CD8-positive, alpha-beta T cell (primary cell): ENCODE measurements at regions of chr1 and their contacts with region 1.

Region 1: DNA sequence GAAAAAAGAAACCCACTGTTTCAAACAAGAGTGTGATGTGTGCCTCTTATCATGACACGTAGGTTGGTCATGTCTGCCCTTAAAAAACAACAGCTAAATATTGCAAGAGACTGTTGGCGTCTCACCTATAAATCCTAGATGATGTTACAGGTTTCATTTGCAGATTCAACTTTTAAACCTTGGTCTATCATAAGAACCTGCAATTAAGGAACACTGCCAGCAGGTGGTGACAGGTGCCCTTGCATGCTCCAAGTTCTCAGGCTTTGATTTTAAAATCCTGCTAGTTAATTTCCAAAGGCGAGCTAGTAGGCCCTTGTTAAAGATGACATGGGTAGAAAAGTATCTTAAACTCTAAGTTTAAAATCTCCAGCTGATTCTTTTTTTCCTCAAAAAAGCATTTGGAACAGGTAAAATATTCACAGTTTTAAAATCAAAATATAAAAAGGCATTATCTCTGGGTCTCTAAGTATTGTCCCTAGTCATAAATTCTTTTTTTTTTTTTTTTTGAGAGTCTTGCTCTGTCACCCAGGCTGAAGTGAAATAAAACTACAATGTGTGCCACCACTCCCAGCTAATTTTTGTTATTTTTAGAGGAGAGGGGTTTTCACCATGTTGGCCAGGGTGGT is 39.1 kb downstream of the CLSTN1 start:
- DNase-seq: peak; percentile 36 to 84 (median 66)
- ATAC-seq: peak; percentile 54
- H3K4me3 ChIP-seq: no peak overlapping the region
- H3K4me3 Mint-ChIP-seq: no peak overlapping the region
- H3K27ac ChIP-seq: no peak overlapping the region
- H3K27ac Mint-ChIP-seq: no peak overlapping the region
- H3K4me1 ChIP-seq: peaks cover 20% of the 10 kb centered on the region
- H3K4me1 Mint-ChIP-seq: peaks cover 33% of the 10 kb centered on the region
- H3K27me3 ChIP-seq: no peaks in the 10 kb centered on the region
- H3K27me3 Mint-ChIP-seq: no peaks in the 10 kb centered on the region
- CTCF ChIP-seq: peak; percentile 80

Region 2: DNA sequence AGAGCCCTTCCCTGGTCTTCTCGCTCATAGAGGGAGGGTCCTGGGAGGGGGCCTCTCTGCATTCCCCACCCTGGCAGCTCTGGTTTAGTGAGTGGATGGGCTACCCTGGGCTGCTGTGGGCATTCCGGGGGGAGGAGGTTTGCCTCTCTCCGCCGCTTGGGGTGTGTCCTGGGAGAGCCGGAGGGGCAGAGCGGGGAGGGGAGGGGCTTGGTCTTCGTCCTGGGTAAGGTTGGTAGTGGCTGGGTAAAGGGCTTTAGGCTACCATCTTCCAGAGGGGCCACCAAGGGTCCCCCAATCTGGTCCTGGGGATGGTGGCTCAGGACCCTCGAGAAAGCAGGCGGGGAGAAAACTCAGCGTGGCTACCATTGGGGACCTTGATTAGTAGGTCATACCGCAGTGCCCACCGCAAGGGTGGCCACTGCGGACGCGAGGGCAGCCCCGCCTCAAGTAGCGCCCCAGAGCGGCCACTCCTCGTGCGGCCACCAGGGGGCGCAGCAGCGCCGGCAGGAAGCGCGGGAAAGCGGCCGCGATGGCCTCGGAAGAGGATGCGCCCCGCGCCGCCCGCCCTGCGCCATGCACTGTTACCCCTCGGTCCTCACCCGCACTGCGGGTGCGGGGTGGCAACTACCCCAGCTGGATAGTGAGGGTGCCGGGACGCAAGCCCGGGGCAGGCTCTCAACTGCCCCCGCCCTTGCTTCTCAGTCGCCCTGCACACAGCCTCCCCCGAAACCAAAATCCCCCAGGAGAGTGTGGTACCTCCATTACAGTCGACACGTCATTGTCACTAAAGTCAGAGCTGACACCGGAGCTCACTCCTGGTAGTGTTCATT is 289.5 kb before region 1 on chr1:
- CTCF ChIA-PET with region 1: no interaction called
- POLR2A ChIA-PET with region 1: no interaction called
- intact Hi-C with region 1: no loop called
- DNase-seq: peak; percentile 33 to 82 (median 65)
- ATAC-seq: peak; percentile 83
- H3K4me3 ChIP-seq: peak overlapping the region; percentile 39 to 43
- H3K4me3 Mint-ChIP-seq: peak overlapping the region; percentile 67
- H3K27ac ChIP-seq: no peak overlapping the region
- H3K27ac Mint-ChIP-seq: no peak overlapping the region
- H3K4me1 ChIP-seq: peaks cover 8% of the 10 kb centered on the region
- H3K4me1 Mint-ChIP-seq: peaks cover 5% of the 10 kb centered on the region
- H3K27me3 ChIP-seq: no peaks in the 10 kb centered on the region
- H3K27me3 Mint-ChIP-seq: peaks cover 10% of the 10 kb centered on the region
- CTCF ChIP-seq: peak; percentile 93

Region 3: DNA sequence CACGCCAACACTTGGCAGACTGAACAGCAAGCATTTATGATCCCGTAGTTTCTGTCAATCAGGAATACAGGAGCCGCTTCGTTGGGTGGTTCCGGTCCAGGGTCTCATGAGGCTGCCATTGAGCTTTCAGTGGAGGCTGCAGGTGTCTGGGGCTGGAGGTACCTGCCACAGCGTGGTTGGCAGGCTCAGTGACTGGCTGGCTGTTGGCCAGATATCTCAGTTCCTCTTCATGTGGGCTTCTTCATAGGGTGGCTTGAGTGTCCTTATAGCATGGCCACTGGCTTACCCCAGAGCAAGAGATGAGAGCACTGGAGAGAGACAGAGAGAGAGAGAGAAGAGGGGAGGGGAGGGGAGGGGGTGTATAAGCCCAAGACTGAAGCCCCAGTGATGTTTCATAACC is 103.8 kb before region 1 on chr1:
- CTCF ChIA-PET with region 1: no interaction called
- POLR2A ChIA-PET with region 1: no interaction called
- intact Hi-C with region 1: no loop called
- DNase-seq: no peak
- ATAC-seq: no peak
- H3K4me3 ChIP-seq: no peak overlapping the region
- H3K4me3 Mint-ChIP-seq: no peak overlapping the region
- H3K27ac ChIP-seq: peak overlapping the region in 1 of 2 experiments; percentile 17
- H3K27ac Mint-ChIP-seq: peak overlapping the region; percentile 90
- H3K4me1 ChIP-seq: peaks cover 74% of the 10 kb centered on the region
- H3K4me1 Mint-ChIP-seq: peaks cover 68% of the 10 kb centered on the region
- H3K27me3 ChIP-seq: no peaks in the 10 kb centered on the region
- H3K27me3 Mint-ChIP-seq: no peaks in the 10 kb centered on the region
- CTCF ChIP-seq: no peak

Region 4: GRCh38 chr1:9724706-9725476 is 59.7 kb before region 1 on chr1:
- CTCF ChIA-PET with region 1: interaction called, 16 read pairs
- POLR2A ChIA-PET with region 1: no interaction called
- intact Hi-C with region 1: no loop called
- DNase-seq: peak; percentile 47 to 84 (median 75)
- ATAC-seq: peak; percentile 47
- H3K4me3 ChIP-seq: no peak overlapping the region
- H3K4me3 Mint-ChIP-seq: peak overlapping the region; percentile 8
- H3K27ac ChIP-seq: peak overlapping the region in 1 of 2 experiments; percentile 16
- H3K27ac Mint-ChIP-seq: peak overlapping the region; percentile 80
- H3K4me1 ChIP-seq: peaks cover 82% of the 10 kb centered on the region
- H3K4me1 Mint-ChIP-seq: peaks cover 71% of the 10 kb centered on the region
- H3K27me3 ChIP-seq: no peaks in the 10 kb centered on the region
- H3K27me3 Mint-ChIP-seq: no peaks in the 10 kb centered on the region
- CTCF ChIP-seq: peak; percentile 97

Region 5: GRCh38 chr1:9798236-9799130 is 13.9 kb after region 1 on chr1:
- CTCF ChIA-PET with region 1: interaction called, 26 read pairs
- POLR2A ChIA-PET with region 1: no interaction called
- intact Hi-C with region 1: no loop called
- DNase-seq: no peak
- ATAC-seq: no peak
- H3K4me3 ChIP-seq: no peak overlapping the region
- H3K4me3 Mint-ChIP-seq: no peak overlapping the region
- H3K27ac ChIP-seq: no peak overlapping the region
- H3K27ac Mint-ChIP-seq: peak overlapping the region; percentile 42
- H3K4me1 ChIP-seq: peaks cover 9% of the 10 kb centered on the region
- H3K4me1 Mint-ChIP-seq: peaks cover 58% of the 10 kb centered on the region
- H3K27me3 ChIP-seq: no peaks in the 10 kb centered on the region
- H3K27me3 Mint-ChIP-seq: no peaks in the 10 kb centered on the region
- CTCF ChIP-seq: no peak

Region 6: GRCh38 chr1:9823943-9824701 is 39.5 kb after region 1 on chr1 and contains the start of gene CLSTN1:
- CTCF ChIA-PET with region 1: interaction called, 12 read pairs
- POLR2A ChIA-PET with region 1: interaction called, 3 read pairs
- intact Hi-C with region 1: loop called (anchors 2 kb)
- DNase-seq: peak; percentile 76 to 93 (median 91)
- ATAC-seq: peak; percentile 72
- H3K4me3 ChIP-seq: peak within 1 kb of the TSS; percentile 58 to 72
- H3K4me3 Mint-ChIP-seq: peak within 1 kb of the TSS; percentile 96
- H3K27ac ChIP-seq: peak within 1 kb of the TSS; percentile 37 to 76
- H3K27ac Mint-ChIP-seq: peak within 1 kb of the TSS; percentile 89
- H3K4me1 ChIP-seq: peaks cover 36% of the 10 kb centered on the region
- H3K4me1 Mint-ChIP-seq: peaks cover 43% of the 10 kb centered on the region
- H3K27me3 ChIP-seq: no peaks in the 10 kb centered on the region
- H3K27me3 Mint-ChIP-seq: no peaks in the 10 kb centered on the region
- CTCF ChIP-seq: no peak
- total RNA-seq, gene CLSTN1: 50.0 to 51.1 TPM

Region 7: DNA sequence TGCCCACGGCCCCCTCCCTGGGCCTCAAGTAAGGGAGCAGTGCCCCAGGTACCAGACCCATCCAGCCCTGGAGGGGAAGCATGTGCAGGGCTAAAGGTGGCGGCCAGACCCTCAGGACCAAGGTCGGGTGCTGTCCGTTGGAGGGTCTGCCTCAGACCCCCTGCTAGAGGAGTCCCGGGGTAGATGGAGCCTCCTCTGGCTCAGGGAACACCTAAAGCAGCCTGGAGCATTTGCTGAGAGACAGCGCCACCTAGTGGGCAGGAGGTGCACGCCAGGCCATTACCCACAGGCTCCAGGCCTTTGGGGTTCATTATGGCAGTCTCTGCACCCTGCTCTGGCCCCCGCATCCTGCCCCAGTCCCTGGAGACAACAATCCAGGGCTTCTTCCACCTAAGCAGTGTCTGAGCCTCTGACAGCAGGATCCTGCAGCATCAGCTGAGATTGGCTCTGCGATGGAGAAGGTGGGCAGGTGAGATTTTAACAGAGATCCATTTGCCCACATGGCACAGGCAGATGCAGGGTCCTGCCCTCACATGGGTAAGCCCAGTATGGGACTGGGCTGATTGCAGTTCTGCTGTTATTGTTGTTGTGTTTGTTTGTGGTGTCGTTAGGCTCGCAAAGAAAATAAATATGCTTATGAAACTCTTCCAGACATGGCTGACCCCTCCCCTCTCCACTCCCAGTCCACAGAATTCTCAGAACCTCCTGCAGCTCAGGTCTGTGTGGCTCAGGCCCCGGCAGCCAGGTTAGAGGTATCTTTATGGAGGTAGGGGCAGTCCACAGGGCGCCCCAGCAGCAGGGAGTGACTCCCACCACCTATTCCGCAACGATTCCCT is 83.0 kb after region 1 on chr1:
- CTCF ChIA-PET with region 1: interaction called, 361 read pairs
- POLR2A ChIA-PET with region 1: interaction called, 3 read pairs
- intact Hi-C with region 1: loop called in 1 of 2 experiments (anchors 1 kb)
- DNase-seq: peak; percentile 76 to 95 (median 88)
- ATAC-seq: peak; percentile 99
- H3K4me3 ChIP-seq: no peak overlapping the region
- H3K4me3 Mint-ChIP-seq: no peak overlapping the region
- H3K27ac ChIP-seq: no peak overlapping the region
- H3K27ac Mint-ChIP-seq: no peak overlapping the region
- H3K4me1 ChIP-seq: no peaks in the 10 kb centered on the region
- H3K4me1 Mint-ChIP-seq: no peaks in the 10 kb centered on the region
- H3K27me3 ChIP-seq: no peaks in the 10 kb centered on the region
- H3K27me3 Mint-ChIP-seq: no peaks in the 10 kb centered on the region
- CTCF ChIP-seq: peak; percentile 91

Region 8: GRCh38 chr1:10140981-10141380 is 356.4 kb after region 1 on chr1:
- CTCF ChIA-PET with region 1: no interaction called
- POLR2A ChIA-PET with region 1: no interaction called
- intact Hi-C with region 1: no loop called
- DNase-seq: no peak
- ATAC-seq: no peak
- H3K4me3 ChIP-seq: no peak overlapping the region
- H3K4me3 Mint-ChIP-seq: no peak overlapping the region
- H3K27ac ChIP-seq: no peak overlapping the region
- H3K27ac Mint-ChIP-seq: no peak overlapping the region
- H3K4me1 ChIP-seq: no peaks in the 10 kb centered on the region
- H3K4me1 Mint-ChIP-seq: no peaks in the 10 kb centered on the region
- H3K27me3 ChIP-seq: no peaks in the 10 kb centered on the region
- H3K27me3 Mint-ChIP-seq: no peaks in the 10 kb centered on the region
- CTCF ChIP-seq: no peak

Region 9: GRCh38 chr1:10430216-10431069 is 645.8 kb after region 1 on chr1 and contains the start of gene CENPS:
- CTCF ChIA-PET with region 1: interaction called, 4 read pairs
- POLR2A ChIA-PET with region 1: no interaction called
- intact Hi-C with region 1: loop called in 1 of 2 experiments (anchors 1 kb)
- DNase-seq: peak; percentile 72 to 95 (median 92)
- ATAC-seq: peak; percentile 85
- H3K4me3 ChIP-seq: peak within 1 kb of the TSS; percentile 85 to 96
- H3K4me3 Mint-ChIP-seq: peak within 1 kb of the TSS; percentile 89
- H3K27ac ChIP-seq: peak within 1 kb of the TSS; percentile 81 to 86
- H3K27ac Mint-ChIP-seq: peak within 1 kb of the TSS; percentile 91
- H3K4me1 ChIP-seq: peaks cover 18% of the 10 kb centered on the region
- H3K4me1 Mint-ChIP-seq: peaks cover 23% of the 10 kb centered on the region
- H3K27me3 ChIP-seq: no peaks in the 10 kb centered on the region
- H3K27me3 Mint-ChIP-seq: no peaks in the 10 kb centered on the region
- CTCF ChIP-seq: peak; percentile 97
- total RNA-seq, gene CENPS: 2.0 to 3.5 TPM